Naive thymus-derived CD4-positive, alpha-beta T cell (primary cell): ENCODE measurements at regions of chr9 and their contacts with region 1.

Region 1: DNA sequence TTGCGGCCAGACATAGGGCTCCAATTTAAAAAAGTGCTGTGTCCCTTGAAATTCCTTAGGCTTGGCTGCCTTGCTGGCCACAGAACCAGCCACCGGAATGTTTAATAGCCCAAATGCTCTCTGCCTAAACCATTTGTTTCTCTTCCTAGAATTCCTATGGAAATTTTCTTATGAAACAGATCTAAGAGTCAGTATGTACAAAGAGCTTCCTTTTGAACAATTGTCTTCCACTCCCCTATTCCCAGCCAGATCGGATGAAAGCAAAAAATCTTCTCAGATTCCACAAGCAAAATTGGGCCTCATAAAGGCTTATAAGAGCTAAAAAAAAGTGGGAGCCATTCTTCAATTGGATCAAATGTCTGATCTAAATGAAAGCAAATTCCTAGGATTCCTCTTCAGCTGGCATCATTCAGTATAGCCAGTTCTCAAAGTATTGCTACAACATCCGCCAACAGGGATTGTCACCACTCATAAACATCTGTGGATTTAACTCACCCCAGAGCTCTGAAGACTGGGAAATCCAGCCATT is 104.3 kb downstream of the CEMIP2 start:
- DNase-seq: no peak
- ATAC-seq: no peak
- H3K4me3 ChIP-seq: no peak overlapping the region
- H3K4me3 Mint-ChIP-seq: peak overlapping the region in 1 of 10 donors; percentile 15
- H3K27ac ChIP-seq: no peak overlapping the region
- H3K27ac Mint-ChIP-seq: no peak overlapping the region
- H3K4me1 ChIP-seq: no peaks in the 10 kb centered on the region
- H3K4me1 Mint-ChIP-seq: peaks cover 0 to 18% (median 0%) of the 10 kb centered on the region in 7 donors
- H3K27me3 ChIP-seq: no peaks in the 10 kb centered on the region
- H3K27me3 Mint-ChIP-seq: peaks cover 0 to 16% (median 0%) of the 10 kb centered on the region in 5 donors

Region 2: GRCh38 chr9:71710856-71711255 is 46.9 kb after region 1 on chr9:
- CTCF ChIA-PET with region 1: no interaction called
- POLR2A ChIA-PET with region 1: no interaction called
- intact Hi-C with region 1: loop called in 1 of 2 experiments (anchors 5 kb)
- DNase-seq: no peak
- ATAC-seq: no peak
- H3K4me3 ChIP-seq: no peak overlapping the region
- H3K4me3 Mint-ChIP-seq: no peak overlapping the region
- H3K27ac ChIP-seq: no peak overlapping the region
- H3K27ac Mint-ChIP-seq: peak overlapping the region in 2 of 9 donors; percentile 42 to 49
- H3K4me1 ChIP-seq: no peaks in the 10 kb centered on the region
- H3K4me1 Mint-ChIP-seq: peaks cover 1 to 21% (median 12%) of the 10 kb centered on the region in 7 donors
- H3K27me3 ChIP-seq: no peaks in the 10 kb centered on the region
- H3K27me3 Mint-ChIP-seq: no peaks in the 10 kb centered on the region

Region 3: GRCh38 chr9:71758785-71759184 is 94.8 kb after region 1 on chr9:
- CTCF ChIA-PET with region 1: no interaction called
- POLR2A ChIA-PET with region 1: no interaction called
- intact Hi-C with region 1: no loop called
- DNase-seq: no peak
- ATAC-seq: no peak
- H3K4me3 ChIP-seq: no peak overlapping the region
- H3K4me3 Mint-ChIP-seq: peak overlapping the region in 7 of 10 donors; percentile 3 to 57 (median 25)
- H3K27ac ChIP-seq: no peak overlapping the region
- H3K27ac Mint-ChIP-seq: peak overlapping the region in 3 of 9 donors; percentile 28 to 79 (median 71)
- H3K4me1 ChIP-seq: peaks cover 28 to 45% of the 10 kb centered on the region in 2 donors
- H3K4me1 Mint-ChIP-seq: peaks cover 60 to 98% (median 95%) of the 10 kb centered on the region in 7 donors
- H3K27me3 ChIP-seq: no peaks in the 10 kb centered on the region
- H3K27me3 Mint-ChIP-seq: no peaks in the 10 kb centered on the region